MCF 10A (cell line): ENCODE measurements at regions of chr5 and their contacts with region 1.

Region 1: DNA sequence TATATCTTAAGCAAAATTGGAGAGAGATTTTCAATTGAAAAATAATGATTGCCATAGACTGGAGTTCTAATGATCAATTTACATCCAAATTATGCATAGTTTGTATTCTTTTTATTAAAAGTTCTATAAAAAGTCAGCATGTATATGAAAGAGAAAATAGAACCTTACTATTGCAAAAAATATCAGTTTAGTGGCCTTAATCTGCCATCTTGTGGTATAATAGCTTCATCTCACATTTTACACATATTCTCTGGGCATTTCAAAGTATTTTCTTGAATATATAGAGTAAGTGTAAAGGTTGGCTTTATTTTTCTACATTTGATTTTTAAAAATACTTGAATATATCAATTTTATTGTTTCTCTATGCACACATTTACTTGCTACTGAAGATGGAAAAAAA is 1858.6 kb upstream of the CDH9 start:
- DNase-seq: peak; percentile 34
- H3K4me3 Mint-ChIP-seq: no peak overlapping the region
- H3K27ac Mint-ChIP-seq: no peak overlapping the region
- H3K4me1 Mint-ChIP-seq: peaks cover 7% of the 10 kb centered on the region
- H3K27me3 Mint-ChIP-seq: no peaks in the 10 kb centered on the region
- CTCF ChIP-seq: peak; percentile 31

Region 2: DNA sequence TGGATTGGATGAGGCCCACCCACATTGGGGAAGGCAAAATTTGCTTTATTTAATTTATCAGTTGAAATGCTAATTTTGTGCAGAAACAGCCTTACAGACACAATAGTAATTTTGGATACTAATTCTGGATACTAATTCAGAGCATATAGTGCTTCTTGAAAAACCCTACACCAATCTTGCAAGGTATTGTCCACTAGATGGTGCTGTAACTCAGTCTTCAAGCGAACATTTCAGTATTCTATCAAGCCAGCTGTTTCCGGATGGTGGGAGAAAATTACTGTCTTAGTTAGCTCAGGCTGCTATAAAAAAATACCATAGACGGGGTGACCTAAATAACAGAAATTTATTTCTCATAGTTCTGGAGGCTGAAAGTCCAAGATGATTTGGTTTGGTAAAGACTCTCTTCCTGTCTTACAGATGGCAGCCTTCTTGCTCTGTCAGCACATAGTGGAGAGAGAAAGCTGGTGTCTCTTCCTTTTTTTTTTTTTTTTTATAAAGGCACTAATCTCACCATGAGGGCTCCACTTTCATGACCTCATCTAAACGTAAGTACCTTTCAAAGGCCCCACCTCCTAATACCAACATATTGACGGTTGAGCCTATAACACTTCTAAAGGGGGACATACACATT is 552.0 kb before region 1 on chr5:
- CTCF ChIA-PET with region 1: interaction called, 3 read pairs
- POLR2A ChIA-PET with region 1: no interaction called
- intact Hi-C with region 1: loop called (anchors 2 kb)
- DNase-seq: peak; percentile 60
- H3K4me3 Mint-ChIP-seq: no peak overlapping the region
- H3K27ac Mint-ChIP-seq: no peak overlapping the region
- H3K4me1 Mint-ChIP-seq: no peaks in the 10 kb centered on the region
- H3K27me3 Mint-ChIP-seq: no peaks in the 10 kb centered on the region
- CTCF ChIP-seq: peak; percentile 64

Region 3: DNA sequence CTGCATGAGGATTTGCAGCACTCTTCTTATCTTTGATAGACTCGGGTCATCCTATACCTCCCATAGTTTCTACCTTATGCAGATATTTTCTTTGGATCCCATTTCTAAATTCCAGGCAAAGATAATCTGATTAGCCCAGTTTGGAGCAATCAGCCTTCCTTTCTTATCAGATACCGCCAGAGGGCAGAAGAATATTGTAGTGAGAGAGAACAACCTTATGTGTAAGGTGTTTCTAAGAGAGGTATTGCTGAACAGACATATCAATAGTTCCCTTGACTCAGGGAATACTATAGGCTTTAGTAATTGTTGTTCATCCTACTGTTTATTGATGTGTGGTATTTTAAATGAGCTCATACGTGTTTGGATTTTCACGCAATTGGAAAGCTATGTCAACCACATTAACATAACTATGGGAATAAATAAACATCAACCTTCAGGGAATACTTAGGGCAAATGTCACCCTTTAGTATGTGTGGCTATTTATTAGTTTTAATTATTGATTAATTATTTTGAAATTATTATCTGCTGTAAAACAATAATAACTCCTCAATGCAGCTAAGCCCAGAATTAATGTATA is 423.3 kb before region 1 on chr5:
- CTCF ChIA-PET with region 1: interaction called, 11 read pairs
- POLR2A ChIA-PET with region 1: interaction called, 3 read pairs
- intact Hi-C with region 1: loop called (anchors 2 kb)
- DNase-seq: peak; percentile 34
- H3K4me3 Mint-ChIP-seq: no peak overlapping the region
- H3K27ac Mint-ChIP-seq: no peak overlapping the region
- H3K4me1 Mint-ChIP-seq: no peaks in the 10 kb centered on the region
- H3K27me3 Mint-ChIP-seq: no peaks in the 10 kb centered on the region
- CTCF ChIP-seq: no peak

Region 4: GRCh38 chr5:28766565-28767158 is 130.3 kb before region 1 on chr5:
- CTCF ChIA-PET with region 1: no interaction called
- POLR2A ChIA-PET with region 1: no interaction called
- intact Hi-C with region 1: no loop called
- DNase-seq: peak; percentile 69
- H3K4me3 Mint-ChIP-seq: no peak overlapping the region
- H3K27ac Mint-ChIP-seq: no peak overlapping the region
- H3K4me1 Mint-ChIP-seq: peaks cover 9% of the 10 kb centered on the region
- H3K27me3 Mint-ChIP-seq: no peaks in the 10 kb centered on the region
- CTCF ChIP-seq: peak; percentile 59

Region 5: GRCh38 chr5:28779161-28779754 is 117.7 kb before region 1 on chr5:
- CTCF ChIA-PET with region 1: interaction called, 32 read pairs
- POLR2A ChIA-PET with region 1: no interaction called
- intact Hi-C with region 1: loop called (anchors 1 kb)
- DNase-seq: peak; percentile 42
- H3K4me3 Mint-ChIP-seq: no peak overlapping the region
- H3K27ac Mint-ChIP-seq: no peak overlapping the region
- H3K4me1 Mint-ChIP-seq: peaks cover 6% of the 10 kb centered on the region
- H3K27me3 Mint-ChIP-seq: no peaks in the 10 kb centered on the region
- CTCF ChIP-seq: peak; percentile 30

Region 6: DNA sequence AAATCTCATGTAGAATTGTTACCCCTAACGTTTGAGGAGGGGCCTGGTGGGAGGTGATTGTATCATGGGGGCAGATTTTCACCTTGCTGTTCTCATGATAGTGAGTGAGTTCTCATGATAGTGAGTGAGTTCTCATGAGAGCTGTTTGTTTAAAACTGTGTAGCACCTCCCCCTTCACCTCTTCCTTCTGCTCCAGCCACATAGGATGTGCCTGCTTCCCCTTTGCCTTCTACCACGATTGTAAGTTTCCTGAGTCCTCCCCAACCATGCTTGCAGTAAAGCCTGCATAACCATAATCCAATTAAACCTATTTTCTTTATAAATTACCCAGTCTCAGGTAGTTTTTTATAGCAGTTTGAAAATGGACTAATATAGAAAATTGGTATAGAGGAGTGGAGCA is 74.9 kb before region 1 on chr5:
- CTCF ChIA-PET with region 1: no interaction called
- POLR2A ChIA-PET with region 1: no interaction called
- intact Hi-C with region 1: no loop called
- DNase-seq: no peak
- H3K4me3 Mint-ChIP-seq: no peak overlapping the region
- H3K27ac Mint-ChIP-seq: no peak overlapping the region
- H3K4me1 Mint-ChIP-seq: no peaks in the 10 kb centered on the region
- H3K27me3 Mint-ChIP-seq: no peaks in the 10 kb centered on the region
- CTCF ChIP-seq: no peak

Region 7: GRCh38 chr5:28961796-28962195 is 64.8 kb after region 1 on chr5:
- CTCF ChIA-PET with region 1: no interaction called
- POLR2A ChIA-PET with region 1: no interaction called
- intact Hi-C with region 1: no loop called
- DNase-seq: no peak
- H3K4me3 Mint-ChIP-seq: no peak overlapping the region
- H3K27ac Mint-ChIP-seq: no peak overlapping the region
- H3K4me1 Mint-ChIP-seq: no peaks in the 10 kb centered on the region
- H3K27me3 Mint-ChIP-seq: no peaks in the 10 kb centered on the region
- CTCF ChIP-seq: no peak

Region 8: GRCh38 chr5:29547236-29547865 is 650.4 kb after region 1 on chr5:
- CTCF ChIA-PET with region 1: no interaction called
- POLR2A ChIA-PET with region 1: no interaction called
- intact Hi-C with region 1: no loop called
- DNase-seq: no peak
- H3K4me3 Mint-ChIP-seq: no peak overlapping the region
- H3K27ac Mint-ChIP-seq: no peak overlapping the region
- H3K4me1 Mint-ChIP-seq: peaks cover 12% of the 10 kb centered on the region
- H3K27me3 Mint-ChIP-seq: no peaks in the 10 kb centered on the region
- CTCF ChIP-seq: no peak